Heart right ventricle (tissue), 16 donors: ENCODE measurements at regions of chr22 and their contacts with region 1.

Region 1: GRCh38 chr22:40679964-40680818 is 907 bp downstream of the MCHR1 start:
- DNase-seq: no peak
- ATAC-seq: peak in 1 of 8 donors; percentile 28
- H3K4me3 ChIP-seq: peak overlapping the region in 6 of 10 donors; percentile 5 to 46 (median 40)
- H3K27ac ChIP-seq: peak overlapping the region in 2 of 10 donors; percentile 31 to 53
- H3K4me1 ChIP-seq: peaks cover 6 to 50% (median 25%) of the 10 kb centered on the region in 9 donors
- H3K27me3 ChIP-seq: peaks cover 0 to 22% (median 0%) of the 10 kb centered on the region in 7 donors
- CTCF ChIP-seq: no peak

Region 2: GRCh38 chr22:39997939-39998338 is 682.3 kb before region 1 on chr22:
- intact Hi-C with region 1: no loop called
- DNase-seq: peak; percentile 17 to 48
- ATAC-seq: peak in 7 of 8 donors; percentile 37 to 78 (median 53)
- H3K4me3 ChIP-seq: no peak overlapping the region
- H3K27ac ChIP-seq: no peak overlapping the region
- H3K4me1 ChIP-seq: peaks cover 0 to 27% (median 15%) of the 10 kb centered on the region in 9 donors
- H3K27me3 ChIP-seq: peaks cover 0 to 47% (median 28%) of the 10 kb centered on the region in 7 donors
- CTCF ChIP-seq: no peak

Region 3: DNA sequence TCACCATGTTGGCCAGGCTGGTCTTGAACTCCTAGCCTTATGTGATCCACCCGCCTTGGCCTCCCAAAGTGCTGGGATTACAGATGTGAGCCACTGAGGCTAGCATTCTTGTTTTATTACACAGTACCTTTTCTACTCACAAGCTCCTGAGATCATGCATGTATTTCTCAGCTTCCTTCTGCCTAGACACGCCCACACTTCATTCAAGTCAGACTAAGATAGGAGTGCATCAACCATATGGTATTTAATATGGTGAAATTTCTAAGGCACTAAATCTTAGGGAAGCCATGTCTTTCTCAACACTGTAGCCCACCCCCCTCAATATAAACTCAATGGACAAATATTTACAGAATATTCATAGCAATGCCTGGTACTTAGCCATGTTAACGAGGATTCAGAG is 76.9 kb after region 1 on chr22:
- intact Hi-C with region 1: loop called (anchors 1 to 10 kb)
- DNase-seq: no peak
- ATAC-seq: no peak
- H3K4me3 ChIP-seq: no peak overlapping the region
- H3K27ac ChIP-seq: no peak overlapping the region
- H3K4me1 ChIP-seq: peaks cover 0 to 4% (median 0%) of the 10 kb centered on the region in 9 donors
- H3K27me3 ChIP-seq: no peaks in the 10 kb centered on the region
- CTCF ChIP-seq: no peak

Region 4: DNA sequence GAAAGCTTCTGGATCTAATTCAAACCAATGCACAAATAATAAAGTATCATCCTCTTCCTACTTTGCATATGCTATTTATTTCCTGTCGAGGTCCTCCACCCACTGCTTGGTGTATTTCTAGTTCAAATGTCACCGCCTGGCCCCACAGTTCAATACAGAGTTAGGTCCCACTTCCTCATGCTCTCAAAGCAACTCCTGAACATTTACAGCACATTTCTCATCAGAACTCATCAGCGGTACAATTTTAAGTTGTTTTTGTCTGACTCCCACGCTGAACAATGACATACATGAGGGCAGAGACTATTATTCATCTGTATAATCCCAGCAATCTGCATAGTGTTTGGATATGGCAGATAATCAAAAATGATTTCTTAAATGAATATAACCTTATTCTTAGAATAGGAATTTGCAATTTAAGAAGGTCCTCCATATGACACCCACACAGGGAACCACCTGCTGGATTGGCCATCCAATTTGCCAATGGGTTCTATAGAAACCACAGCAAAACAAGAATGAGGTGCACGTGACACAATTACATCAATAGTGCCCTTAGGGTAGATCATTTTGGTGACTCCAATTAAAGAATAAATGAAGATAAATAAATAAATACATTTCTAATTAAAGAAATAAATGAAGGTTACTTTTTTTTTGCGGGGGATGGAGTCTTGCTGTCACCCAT is 84.7 kb after region 1 on chr22:
- intact Hi-C with region 1: loop called in 6 of 10 experiments (anchors 1 to 5 kb)
- DNase-seq: no peak
- ATAC-seq: no peak
- H3K4me3 ChIP-seq: no peak overlapping the region
- H3K27ac ChIP-seq: no peak overlapping the region
- H3K4me1 ChIP-seq: peaks cover 0 to 5% (median 0%) of the 10 kb centered on the region in 9 donors
- H3K27me3 ChIP-seq: no peaks in the 10 kb centered on the region
- CTCF ChIP-seq: no peak

Region 5: DNA sequence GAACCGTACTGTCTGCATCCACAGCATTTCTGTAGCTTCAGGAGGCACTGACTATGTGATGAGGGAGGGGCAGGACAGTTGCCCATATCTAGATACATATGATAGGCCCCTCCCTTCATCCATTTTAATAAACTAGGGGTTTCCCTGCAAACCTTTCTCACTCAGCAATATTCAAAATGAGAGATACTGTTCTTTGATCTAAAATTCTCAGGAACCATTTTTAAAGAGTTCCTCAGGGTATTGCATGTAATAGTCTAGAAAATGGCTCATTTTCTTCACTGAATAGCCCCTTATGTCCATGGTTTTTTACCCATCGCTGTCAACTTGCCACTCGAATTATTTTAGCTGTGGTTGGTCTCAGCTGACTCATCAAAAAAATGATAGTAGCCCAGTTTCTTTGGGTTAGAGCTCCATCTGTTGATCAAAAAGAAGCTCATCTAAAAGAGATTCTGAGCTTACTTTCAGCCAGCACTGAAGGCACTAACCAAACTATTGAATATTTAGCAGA is 218.7 kb after region 1 on chr22:
- intact Hi-C with region 1: loop called in 1 of 10 experiments (anchors 10 kb)
- DNase-seq: no peak
- ATAC-seq: peak in 2 of 8 donors; percentile 43 to 46
- H3K4me3 ChIP-seq: no peak overlapping the region
- H3K27ac ChIP-seq: no peak overlapping the region
- H3K4me1 ChIP-seq: peaks cover 0 to 28% (median 2%) of the 10 kb centered on the region in 9 donors
- H3K27me3 ChIP-seq: no peaks in the 10 kb centered on the region
- CTCF ChIP-seq: peak in 6 of 9 donors; percentile 39 to 65 (median 56)